ENCODE measurements at regions of chr7 and their contacts with region 1.

Region 1: DNA sequence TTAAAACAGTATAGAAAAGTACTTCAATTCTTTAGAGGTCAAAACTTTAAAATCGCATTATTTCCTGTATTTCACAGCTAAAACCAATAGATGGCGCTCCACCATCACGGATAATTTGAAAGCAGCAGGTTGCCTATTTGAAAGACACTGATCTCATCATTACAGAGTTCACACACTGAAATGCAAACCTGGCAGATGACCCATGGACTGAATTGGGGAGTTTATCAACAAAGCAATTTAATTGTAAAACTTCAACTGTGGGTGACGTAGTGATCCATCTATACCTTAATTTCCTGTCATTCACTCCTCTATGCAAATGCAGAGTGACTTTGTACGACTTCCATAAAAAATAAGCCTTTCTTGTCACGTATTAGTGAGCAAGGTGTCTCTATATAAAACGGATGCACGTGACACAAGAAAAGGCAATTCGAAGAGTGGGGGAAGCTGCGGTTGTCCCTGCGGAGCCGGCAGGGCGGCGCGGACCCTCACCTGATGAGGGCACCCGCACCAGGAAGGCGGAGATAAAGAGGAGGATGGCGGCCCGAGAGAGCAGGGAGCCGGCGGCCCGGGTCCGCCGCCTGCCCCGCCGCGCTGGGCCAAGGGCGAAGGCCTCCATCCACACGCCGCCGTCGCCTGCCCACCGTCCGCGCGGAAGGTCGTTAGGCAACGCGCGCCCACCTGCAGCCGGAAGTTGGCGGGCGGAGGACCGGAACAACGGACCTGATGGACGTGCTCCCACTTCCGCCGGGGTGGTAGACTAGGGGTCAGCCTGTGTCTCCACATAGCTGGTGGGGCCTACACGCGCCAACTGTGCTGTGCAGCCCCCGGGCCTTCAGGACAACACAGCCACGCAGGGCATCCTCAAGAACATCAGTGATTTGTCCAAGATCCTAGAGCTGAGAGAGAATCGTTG is at the start of gene ZPBP:
- DNase-seq: peak; percentile 86
- H3K4me3 Mint-ChIP-seq: peak within 1 kb of the TSS; percentile 87
- H3K27ac Mint-ChIP-seq: peak within 1 kb of the TSS; percentile 69
- H3K4me1 Mint-ChIP-seq: peaks cover 4% of the 10 kb centered on the region
- H3K27me3 Mint-ChIP-seq: peaks cover 18% of the 10 kb centered on the region
- total RNA-seq, gene ZPBP: not detected in 2 replicates

Region 2: GRCh38 chr7:50304158-50304910 is 211.5 kb after region 1 on chr7 and contains the start of gene IKZF1:
- intact Hi-C with region 1: loop called (anchors 1 kb)
- DNase-seq: peak; percentile 87
- H3K4me3 Mint-ChIP-seq: peak within 1 kb of the TSS; percentile 95
- H3K27ac Mint-ChIP-seq: peak within 1 kb of the TSS; percentile 97
- H3K4me1 Mint-ChIP-seq: peaks cover 39% of the 10 kb centered on the region
- H3K27me3 Mint-ChIP-seq: peaks cover 4% of the 10 kb centered on the region
- total RNA-seq, gene IKZF1: 282 and 292 TPM in 2 replicates

Region 3: DNA sequence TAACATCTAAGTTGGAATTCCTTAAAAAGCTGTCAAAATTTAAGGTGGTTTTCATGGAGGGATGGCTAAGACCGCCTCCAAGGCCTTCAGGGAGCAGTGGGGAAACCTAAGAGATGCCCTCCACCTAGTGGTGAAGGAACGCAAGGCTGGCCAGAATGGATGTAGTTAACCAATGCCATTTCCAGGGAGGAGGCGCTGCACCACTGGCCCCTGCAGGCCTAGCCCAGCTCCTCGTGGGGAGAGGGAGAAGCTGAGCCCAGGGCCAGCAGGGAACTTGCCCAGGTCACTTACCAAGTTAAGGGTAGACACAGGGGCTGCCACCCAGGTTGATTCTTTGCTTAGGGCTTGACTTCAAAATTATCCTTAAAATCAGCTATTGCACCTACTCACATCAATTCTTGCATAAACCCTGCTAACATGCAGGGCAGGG is 325.3 kb after region 1 on chr7:
- intact Hi-C with region 1: loop called (anchors 1 kb)
- DNase-seq: peak; percentile 92
- H3K4me3 Mint-ChIP-seq: no peak overlapping the region
- H3K27ac Mint-ChIP-seq: no peak overlapping the region
- H3K4me1 Mint-ChIP-seq: peaks cover 31% of the 10 kb centered on the region
- H3K27me3 Mint-ChIP-seq: no peaks in the 10 kb centered on the region

Region 4: GRCh38 chr7:50632561-50633413 is 540.0 kb after region 1 on chr7:
- intact Hi-C with region 1: loop called (anchors 1 kb)
- DNase-seq: peak; percentile 86
- H3K4me3 Mint-ChIP-seq: no peak overlapping the region
- H3K27ac Mint-ChIP-seq: no peak overlapping the region
- H3K4me1 Mint-ChIP-seq: peaks cover 4% of the 10 kb centered on the region
- H3K27me3 Mint-ChIP-seq: peaks cover 35% of the 10 kb centered on the region

Region 5: DNA sequence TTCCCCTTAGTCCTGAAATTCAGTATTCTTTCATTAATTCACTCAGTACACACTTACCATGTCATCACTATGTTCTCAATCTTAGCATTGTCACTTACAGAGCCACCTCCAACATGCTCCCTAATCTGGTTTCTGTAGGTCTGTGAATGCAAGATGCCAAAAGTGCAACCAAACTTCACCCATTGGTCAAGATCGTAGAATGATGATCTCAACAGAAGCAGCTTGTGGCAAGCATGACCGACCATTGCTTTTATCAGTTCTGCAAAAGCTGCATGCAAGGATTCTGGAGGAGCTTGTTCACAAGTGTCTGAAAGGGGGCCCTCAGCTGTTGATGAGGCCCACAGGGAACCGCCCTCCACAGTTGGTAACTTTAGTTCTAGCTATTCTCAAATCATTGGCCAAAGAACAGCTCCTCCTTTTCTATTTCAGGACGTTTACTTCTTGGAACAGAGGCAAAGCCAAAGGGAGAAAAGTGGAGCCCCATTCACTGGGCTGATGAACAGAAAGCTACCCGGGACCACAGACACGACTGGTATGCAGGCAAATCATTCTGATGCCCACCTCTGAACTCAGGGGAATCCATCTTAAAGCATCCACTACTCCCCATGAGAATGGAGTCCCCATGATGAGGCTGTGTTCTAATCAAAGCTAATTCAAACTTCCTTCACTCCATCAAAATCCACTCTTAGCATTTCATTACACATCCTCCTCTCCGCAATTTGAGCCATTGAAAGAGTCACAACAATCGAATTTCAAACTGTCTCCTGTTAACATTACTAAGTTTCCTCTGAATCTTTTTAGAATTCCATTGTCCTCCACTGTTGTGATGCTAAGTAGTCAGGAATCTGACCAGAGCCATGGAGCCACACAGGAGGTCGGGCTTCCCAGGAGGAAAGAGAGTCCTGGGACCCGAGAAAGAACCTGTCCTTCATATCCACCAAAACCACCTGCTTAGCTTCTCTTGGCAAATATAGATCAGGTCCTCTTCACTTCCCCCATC is 676.0 kb after region 1 on chr7:
- intact Hi-C with region 1: no loop called
- DNase-seq: no peak
- H3K4me3 Mint-ChIP-seq: no peak overlapping the region
- H3K27ac Mint-ChIP-seq: no peak overlapping the region
- H3K4me1 Mint-ChIP-seq: no peaks in the 10 kb centered on the region
- H3K27me3 Mint-ChIP-seq: no peaks in the 10 kb centered on the region

Region 6: GRCh38 chr7:51067757-51068156 is 974.9 kb after region 1 on chr7:
- intact Hi-C with region 1: loop called (anchors 5 kb)
- DNase-seq: peak; percentile 82
- H3K4me3 Mint-ChIP-seq: no peak overlapping the region
- H3K27ac Mint-ChIP-seq: no peak overlapping the region
- H3K4me1 Mint-ChIP-seq: no peaks in the 10 kb centered on the region
- H3K27me3 Mint-ChIP-seq: no peaks in the 10 kb centered on the region

Region 7: GRCh38 chr7:51366930-51367613 is 1274.2 kb after region 1 on chr7:
- intact Hi-C with region 1: loop called (anchors 10 kb)
- DNase-seq: peak; percentile 59
- H3K4me3 Mint-ChIP-seq: no peak overlapping the region
- H3K27ac Mint-ChIP-seq: no peak overlapping the region
- H3K4me1 Mint-ChIP-seq: no peaks in the 10 kb centered on the region
- H3K27me3 Mint-ChIP-seq: no peaks in the 10 kb centered on the region

Measured in activated CD4-positive, alpha-beta T cell treated with anti-CD3 and anti-CD28 coated beads, Interleukin-2, amount 10 ng/mL, durations not matched to agents 24 days and 14 days (primary cell).